Spleen (tissue), 13 donors: ENCODE measurements at regions of chr1 and their contacts with region 1.

Region 1: DNA sequence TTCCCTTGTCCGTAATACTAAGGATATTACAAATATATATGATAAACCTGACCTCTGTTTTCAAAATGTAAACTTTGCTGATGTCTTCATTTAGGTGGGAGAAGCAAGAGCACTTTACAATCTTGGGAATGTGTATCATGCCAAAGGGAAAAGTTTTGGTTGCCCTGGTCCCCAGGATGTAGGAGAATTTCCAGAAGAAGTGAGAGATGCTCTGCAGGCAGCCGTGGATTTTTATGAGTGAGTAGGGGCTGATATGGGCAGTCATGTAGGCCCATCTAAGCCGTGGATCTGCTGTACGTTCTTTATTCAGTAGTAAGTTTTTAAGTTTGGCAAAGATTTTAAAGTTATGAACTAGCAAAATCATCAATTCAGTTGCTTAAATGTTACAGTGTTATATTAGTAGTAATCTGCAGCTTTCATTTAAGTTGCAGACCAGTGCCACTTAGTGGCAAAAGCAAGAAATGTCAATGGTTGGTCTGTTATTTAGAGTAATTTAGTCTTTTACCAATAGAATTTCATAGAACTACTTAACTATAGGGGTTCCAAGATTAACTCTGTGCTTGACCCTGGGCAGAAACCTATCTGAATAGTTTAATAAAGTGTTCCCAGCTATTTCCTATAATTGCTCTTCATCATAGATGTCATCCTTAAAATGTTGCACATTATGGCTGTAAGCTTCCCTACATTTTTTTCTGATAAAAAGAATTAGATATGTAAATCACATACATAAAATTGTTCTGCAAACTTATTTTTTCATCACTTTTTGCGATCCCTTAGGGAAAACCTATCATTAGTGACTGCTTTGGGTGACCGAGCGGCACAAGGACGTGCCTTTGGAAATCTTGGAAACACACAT is 21.3 kb downstream of the GPSM2 start:
- DNase-seq: no peak
- H3K4me3 ChIP-seq: no peak overlapping the region
- H3K27ac ChIP-seq: no peak overlapping the region
- H3K4me1 ChIP-seq: peaks cover 0 to 4% (median 0%) of the 10 kb centered on the region in 6 donors
- H3K27me3 ChIP-seq: no peaks in the 10 kb centered on the region
- CTCF ChIP-seq: peak in 9 of 11 experiments; percentile 13 to 75 (median 69)
- POLR2A ChIP-seq: no peak

Region 2: DNA sequence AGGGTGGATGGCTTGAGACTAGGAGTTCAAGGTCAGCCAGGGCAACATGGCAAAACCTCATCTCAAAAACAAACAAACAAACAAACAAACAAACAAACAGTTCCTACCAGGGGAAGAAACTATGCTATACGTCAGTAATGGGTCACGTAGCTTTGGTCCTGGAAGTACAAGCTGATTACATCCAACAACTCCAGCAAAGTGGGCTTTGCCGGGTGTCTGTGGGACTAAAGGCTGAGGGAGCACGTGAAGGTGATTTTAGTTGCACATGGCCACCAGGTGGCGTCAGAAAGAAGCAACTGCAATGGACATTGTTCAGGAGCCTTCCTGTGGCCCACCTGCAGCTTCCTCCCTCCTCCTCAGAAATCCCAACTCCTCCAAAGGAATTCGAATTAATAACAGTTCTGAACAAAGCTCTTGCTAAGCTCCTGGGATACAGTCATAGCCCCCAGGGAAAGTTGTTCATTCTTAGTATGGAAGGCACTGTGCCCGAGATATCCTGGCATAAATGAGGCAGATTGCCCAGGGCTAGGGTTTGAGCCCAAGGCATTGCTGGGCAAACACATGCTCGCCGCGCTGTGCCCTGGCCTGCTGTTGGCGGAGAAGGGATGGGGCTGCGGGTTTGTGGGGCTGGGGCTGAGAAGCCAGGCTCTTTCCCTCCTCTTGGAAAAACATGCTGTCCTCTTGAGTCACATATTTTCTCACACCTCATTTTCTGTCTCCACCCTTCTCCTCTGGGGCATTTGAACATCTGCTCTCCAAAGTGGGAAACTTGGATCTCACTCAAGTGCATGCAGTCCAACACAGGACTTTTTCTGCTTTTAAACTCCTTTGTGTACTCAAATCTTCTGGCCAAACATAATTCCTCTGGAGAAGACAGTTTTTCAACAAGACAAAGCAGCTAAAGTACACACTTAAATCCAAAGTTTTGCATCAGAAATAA is 69.8 kb before region 1 on chr1:
- intact Hi-C with region 1: loop called (anchors 2 kb)
- DNase-seq: peak; percentile 86
- H3K4me3 ChIP-seq: no peak overlapping the region
- H3K27ac ChIP-seq: no peak overlapping the region
- H3K4me1 ChIP-seq: peaks cover 0 to 29% (median 15%) of the 10 kb centered on the region in 6 donors
- H3K27me3 ChIP-seq: no peaks in the 10 kb centered on the region
- CTCF ChIP-seq: peak; percentile 42 to 86 (median 69)
- POLR2A ChIP-seq: no peak

Region 3: DNA sequence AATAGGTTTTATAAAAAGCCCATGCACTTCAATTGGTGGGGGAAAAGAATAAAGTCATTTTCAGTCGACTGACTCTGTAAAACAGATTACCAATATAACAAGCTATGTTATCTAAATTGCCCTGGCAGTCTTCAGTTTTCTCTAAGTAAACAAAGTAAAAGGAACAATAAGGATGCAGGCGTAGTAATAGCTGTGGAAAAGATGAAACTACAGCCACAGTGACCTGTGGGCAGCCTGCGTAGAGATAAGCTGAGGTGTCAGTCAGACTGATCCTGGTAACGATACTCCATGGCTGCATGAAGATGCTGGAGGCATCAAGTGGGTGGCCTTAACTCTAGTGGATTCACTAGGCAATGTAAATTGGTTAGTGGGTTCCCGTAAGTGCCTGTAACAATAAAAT is 35.9 kb after region 1 on chr1:
- intact Hi-C with region 1: no loop called
- DNase-seq: no peak
- H3K4me3 ChIP-seq: no peak overlapping the region
- H3K27ac ChIP-seq: no peak overlapping the region
- H3K4me1 ChIP-seq: no peaks in the 10 kb centered on the region
- H3K27me3 ChIP-seq: no peaks in the 10 kb centered on the region
- CTCF ChIP-seq: no peak
- POLR2A ChIP-seq: no peak

Region 4: DNA sequence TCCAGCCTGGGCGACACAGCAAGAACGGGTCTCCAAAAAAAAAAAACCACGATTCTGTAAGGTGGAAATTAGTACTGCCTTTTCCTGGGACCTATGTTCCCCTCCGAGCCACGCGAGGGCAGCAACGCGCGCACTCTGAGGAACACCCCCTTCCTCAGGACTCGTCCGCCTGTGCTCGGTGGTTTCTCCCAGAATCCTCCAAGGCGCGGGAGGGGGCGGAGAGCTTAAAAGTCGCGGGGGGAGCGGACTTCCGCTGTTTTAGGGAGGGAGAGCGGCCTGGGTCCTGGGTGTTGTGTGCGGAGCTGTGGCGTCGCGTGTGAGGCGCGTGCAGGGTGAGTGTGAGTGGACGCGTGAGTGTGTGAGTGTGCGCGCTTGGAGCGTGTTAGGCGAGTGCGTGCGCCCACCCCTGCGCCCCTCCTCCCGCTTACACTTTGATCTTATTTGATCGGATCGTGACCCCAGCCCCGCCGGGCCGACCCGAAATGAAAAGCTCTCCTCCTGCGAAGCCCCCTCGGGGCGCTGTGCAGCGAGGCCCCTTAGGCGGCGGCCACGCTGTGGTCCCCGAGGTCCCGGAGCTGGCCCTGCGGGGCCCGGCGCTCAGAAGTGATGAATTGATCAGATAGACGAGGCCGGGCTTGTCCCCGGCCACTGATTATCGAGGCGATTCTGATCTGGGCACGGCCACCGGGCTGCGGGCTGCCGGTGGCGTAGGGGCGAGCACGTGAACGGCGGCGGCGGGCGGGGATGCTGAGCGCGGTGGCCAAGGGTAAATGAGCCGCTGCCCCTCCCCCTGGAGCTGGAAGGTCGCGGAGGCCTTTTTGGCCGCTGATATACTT is 202.1 kb after region 1 on chr1:
- intact Hi-C with region 1: no loop called
- DNase-seq: peak; percentile 99
- H3K4me3 ChIP-seq: peak overlapping the region; percentile 78 to 99 (median 94)
- H3K27ac ChIP-seq: peak overlapping the region; percentile 96 to 99 (median 98)
- H3K4me1 ChIP-seq: peaks cover 0 to 33% (median 25%) of the 10 kb centered on the region in 6 donors
- H3K27me3 ChIP-seq: no peaks in the 10 kb centered on the region
- CTCF ChIP-seq: peak; percentile 80 to 98 (median 92)
- POLR2A ChIP-seq: peak; percentile 91 to 95 (median 92)